ENCODE measurements at regions of chr2 and their contacts with region 1.

Region 1: DNA sequence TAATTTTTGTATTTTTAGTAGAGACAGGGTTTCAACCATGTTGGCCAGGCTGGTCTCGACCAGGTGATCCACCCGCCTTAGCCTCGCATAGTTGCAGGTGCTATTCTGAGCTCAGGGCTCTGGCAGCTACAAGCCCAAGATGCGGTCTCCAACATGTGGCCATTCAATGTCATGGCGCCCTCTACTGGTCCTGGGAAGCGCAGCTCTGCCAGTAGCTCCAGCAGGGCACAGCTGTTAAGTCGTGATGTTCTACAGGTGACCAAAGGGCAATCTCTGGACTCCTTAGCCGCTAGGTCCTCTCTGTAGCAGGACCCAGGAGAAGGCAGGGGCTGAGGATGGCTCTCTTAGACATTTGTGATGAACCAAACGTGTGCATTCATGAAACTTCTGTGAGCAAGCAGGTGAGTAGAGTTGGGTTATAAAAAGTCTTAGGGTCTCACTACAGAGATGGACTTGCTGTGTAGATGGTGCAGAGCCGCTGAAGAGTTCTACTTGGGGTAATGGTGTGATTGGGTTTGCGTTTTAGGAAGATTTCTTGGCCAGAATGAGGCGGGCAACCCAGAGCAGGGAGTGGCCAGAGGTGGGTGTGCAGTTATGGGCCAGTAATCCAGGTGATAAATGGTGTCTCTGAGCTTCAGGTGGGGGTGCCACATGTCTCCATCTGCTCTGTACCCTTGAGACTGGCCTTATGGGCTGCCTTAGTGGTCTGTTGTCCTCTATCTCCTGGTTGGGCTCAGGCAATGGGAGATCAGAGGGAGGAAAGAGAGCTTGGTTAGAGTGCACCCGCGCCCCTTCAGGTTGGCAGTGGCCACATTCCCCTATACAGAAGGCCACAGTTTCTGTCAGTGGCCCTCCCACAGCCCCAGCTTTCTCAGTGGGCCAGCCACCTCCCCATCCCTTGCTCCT is 31.0 kb downstream of the IL37 start:
- DNase-seq: peak; percentile 76
- ATAC-seq: peak; percentile 97
- H3K4me3 Mint-ChIP-seq: no peak overlapping the region
- H3K27ac Mint-ChIP-seq: no peak overlapping the region
- H3K4me1 Mint-ChIP-seq: peaks cover 4% of the 10 kb centered on the region
- H3K27me3 Mint-ChIP-seq: peaks cover 24% of the 10 kb centered on the region

Region 2: DNA sequence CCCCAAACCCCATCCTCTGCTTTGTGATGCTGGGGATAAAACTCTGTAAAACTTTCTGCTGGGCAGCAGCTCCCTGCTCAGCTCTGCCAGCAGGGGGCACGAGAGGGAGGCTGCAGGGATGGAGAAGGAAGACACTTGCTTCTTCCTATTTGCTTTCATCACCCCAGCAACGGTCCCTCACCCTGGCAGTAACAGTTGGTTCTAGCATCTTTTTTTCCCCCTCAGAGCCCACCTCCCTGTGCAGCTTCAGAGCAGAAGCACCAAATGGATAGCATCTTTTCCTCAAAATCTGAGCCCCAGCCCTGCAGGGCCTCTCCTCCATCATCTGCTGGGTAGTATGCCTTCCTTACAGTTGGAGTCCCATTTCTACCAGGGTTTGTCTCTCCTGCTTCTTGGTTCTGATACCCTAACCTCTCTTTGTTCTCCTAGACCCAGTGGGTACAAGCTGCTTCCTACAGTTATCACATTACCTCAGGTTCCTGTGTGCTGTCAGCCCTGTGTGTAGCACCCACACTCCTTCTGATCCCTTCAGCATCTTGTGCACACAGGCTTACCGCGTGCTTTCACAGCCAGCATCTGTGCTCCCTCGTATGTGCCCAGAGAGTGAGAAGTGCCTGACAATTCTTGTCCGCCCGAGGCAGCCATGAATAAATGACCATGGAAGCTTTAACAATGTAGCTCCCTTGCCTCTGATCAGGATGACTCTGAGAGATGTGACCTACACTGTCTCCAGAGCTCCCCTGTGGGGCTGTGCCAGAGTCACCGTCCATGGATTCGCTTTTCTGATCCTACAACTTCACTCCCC is 192.0 kb before region 1 on chr2:
- POLR2A ChIA-PET with region 1: interaction called, 13 read pairs
- DNase-seq: peak; percentile 87
- ATAC-seq: peak; percentile 84
- H3K4me3 Mint-ChIP-seq: no peak overlapping the region
- H3K27ac Mint-ChIP-seq: peak overlapping the region; percentile 66
- H3K4me1 Mint-ChIP-seq: peaks cover 27% of the 10 kb centered on the region
- H3K27me3 Mint-ChIP-seq: no peaks in the 10 kb centered on the region